Activated B cell treated with CpG ODN at 0.5 μM for 24 hours (primary cell): ENCODE measurements at regions of chr5 and their contacts with region 1.

Region 1: DNA sequence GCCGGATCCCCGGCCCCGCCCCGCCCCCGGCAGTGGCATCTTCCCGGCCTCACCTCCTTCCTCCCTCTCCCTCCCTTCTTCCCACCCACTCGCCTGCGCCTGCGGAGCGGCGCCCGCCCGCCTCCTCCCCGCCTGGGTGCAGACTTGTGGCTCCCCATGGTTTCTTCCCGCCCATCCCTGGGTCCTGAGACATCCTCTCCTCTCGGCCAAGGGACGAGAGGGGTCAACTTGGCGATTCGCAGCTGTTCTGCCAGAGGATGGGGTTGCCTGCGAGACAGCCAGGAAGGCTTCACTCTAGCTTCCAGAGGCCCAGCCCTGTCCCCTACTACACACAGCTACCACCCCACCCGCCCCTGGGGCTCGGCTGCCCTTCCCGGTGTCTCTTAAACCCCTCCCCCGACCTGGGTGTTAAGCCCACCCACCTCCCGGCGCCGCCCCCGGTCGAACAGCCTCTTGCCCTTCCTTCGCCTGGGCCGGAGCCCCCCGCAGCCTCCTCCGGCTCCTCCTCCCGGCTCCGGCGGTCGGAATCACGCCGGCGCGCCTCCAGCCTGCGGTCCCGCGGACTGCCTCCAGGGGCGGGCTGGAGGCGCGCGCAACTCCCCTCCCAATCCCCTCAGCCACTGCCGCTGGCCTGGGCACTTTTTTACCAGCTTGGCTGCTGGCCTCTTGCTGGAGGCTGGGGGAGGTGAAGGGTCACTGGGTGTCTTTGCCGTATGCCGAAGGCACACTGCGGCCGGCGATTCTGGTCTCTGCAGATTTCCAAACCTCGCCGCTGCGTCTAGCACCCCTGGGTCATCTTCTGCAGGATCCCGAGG is 1.9 kb downstream of the JADE2 start:
- DNase-seq: peak; percentile 73
- ATAC-seq: peak; percentile 49
- H3K4me3 Mint-ChIP-seq: peak overlapping the region; percentile 98
- H3K27ac Mint-ChIP-seq: peak overlapping the region; percentile 85
- H3K4me1 Mint-ChIP-seq: peaks cover 58% of the 10 kb centered on the region
- H3K27me3 Mint-ChIP-seq: no peaks in the 10 kb centered on the region
- CTCF ChIP-seq: no peak

Region 2: DNA sequence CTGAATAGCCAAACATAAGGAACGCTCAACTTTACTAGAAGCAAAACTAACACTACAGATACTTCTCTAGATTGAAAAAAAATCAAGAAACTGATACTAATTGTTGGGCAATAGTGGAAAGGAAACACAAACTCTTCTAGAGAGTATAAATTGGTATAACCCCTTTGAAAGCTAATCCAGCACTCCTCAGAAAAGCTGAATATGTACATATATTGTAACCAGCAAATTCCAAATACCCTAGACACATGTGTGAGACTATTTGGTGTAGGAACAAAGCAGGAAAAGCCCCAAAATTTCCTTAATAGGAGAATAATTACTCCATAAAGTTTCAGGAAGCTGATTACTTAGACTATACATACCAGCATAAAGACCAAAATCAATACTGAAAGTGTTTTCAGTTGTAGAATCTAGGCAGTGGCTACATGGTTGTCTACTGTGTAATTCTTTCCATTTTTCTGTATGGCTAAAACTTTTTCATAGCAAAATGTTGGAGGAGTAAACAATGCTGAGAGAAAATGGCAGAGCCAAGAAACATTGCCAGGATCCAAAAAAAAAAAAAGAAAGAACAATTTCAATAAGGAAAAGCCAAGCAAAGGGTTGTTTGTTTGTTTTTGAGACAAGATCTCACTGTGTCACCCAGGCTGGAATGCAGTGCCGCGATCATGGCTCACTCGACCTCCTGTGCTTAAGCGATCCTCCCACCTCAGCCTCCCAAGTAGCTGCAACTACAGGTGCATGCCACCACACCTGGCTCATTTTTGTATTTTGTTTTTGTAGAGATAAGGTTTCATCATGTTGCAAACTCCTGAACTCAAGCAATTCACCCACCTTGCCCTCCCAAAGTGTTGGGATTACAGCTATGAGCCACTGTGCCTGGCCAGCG is 365.6 kb before region 1 on chr5:
- CTCF ChIA-PET with region 1: no interaction called
- POLR2A ChIA-PET with region 1: no interaction called
- intact Hi-C with region 1: no loop called
- DNase-seq: no peak
- ATAC-seq: no peak
- H3K4me3 Mint-ChIP-seq: no peak overlapping the region
- H3K27ac Mint-ChIP-seq: no peak overlapping the region
- H3K4me1 Mint-ChIP-seq: no peaks in the 10 kb centered on the region
- H3K27me3 Mint-ChIP-seq: no peaks in the 10 kb centered on the region
- CTCF ChIP-seq: no peak

Region 3: DNA sequence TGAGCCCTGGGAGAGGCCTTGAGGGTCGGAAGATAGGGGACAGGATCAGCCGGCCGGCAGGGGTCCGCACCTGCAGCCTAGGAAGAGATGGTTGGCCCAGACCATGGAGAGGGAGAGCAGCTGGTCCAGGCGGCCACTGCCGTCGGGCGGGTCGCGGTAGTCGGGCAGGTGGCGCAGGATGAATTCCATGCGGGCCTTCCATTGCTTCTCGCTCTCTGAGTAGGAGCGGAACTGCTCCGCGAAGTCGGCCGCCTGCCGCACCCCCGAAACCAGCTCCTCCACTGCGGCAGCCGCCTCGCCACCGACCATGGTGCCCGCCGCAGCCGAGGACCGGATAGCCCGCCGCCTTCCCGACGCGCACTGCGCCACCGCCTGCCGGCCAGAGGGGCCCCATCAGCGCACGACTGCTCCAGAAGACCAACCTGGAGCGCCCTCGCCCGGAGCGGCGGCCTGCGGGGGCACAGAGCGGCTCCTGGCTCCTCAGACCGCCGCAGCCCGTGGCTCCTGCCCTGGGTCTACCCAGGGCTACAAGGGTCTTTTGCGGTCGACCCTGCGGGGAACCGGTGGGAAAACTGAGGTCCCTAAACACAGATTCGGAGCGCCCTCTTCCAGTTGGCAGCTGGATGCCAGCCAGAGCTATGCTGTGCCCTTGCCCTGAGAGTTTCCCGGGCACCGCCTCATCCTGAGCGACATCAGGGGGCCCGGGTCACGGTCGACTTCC is 115.6 kb before region 1 on chr5 and contains the start of gene CDKN2AIPNL:
- CTCF ChIA-PET with region 1: interaction called, 24 read pairs
- POLR2A ChIA-PET with region 1: interaction called, 81 read pairs
- intact Hi-C with region 1: loop called (anchors 1 kb)
- DNase-seq: peak; percentile 92
- ATAC-seq: peak; percentile 99
- H3K4me3 Mint-ChIP-seq: peak within 1 kb of the TSS; percentile 95
- H3K27ac Mint-ChIP-seq: peak within 1 kb of the TSS; percentile 85
- H3K4me1 Mint-ChIP-seq: peaks cover 31% of the 10 kb centered on the region
- H3K27me3 Mint-ChIP-seq: no peaks in the 10 kb centered on the region
- CTCF ChIP-seq: no peak
- total RNA-seq, gene CDKN2AIPNL: 21.6 and 22.4 TPM in 2 replicates

Region 4: GRCh38 chr5:134465816-134466240 is 61.5 kb before region 1 on chr5:
- CTCF ChIA-PET with region 1: no interaction called
- POLR2A ChIA-PET with region 1: interaction called, 34 read pairs
- intact Hi-C with region 1: loop called (anchors 2 kb)
- DNase-seq: peak; percentile 68
- ATAC-seq: peak; percentile 82
- H3K4me3 Mint-ChIP-seq: peak overlapping the region; percentile 79
- H3K27ac Mint-ChIP-seq: peak overlapping the region; percentile 66
- H3K4me1 Mint-ChIP-seq: peaks cover 43% of the 10 kb centered on the region
- H3K27me3 Mint-ChIP-seq: no peaks in the 10 kb centered on the region
- CTCF ChIP-seq: no peak

Region 5: GRCh38 chr5:134555890-134556311 is 28.5 kb after region 1 on chr5:
- CTCF ChIA-PET with region 1: interaction called, 41 read pairs
- POLR2A ChIA-PET with region 1: interaction called, 763 read pairs
- intact Hi-C with region 1: loop called (anchors 1 kb)
- DNase-seq: peak; percentile 75
- ATAC-seq: peak; percentile 73
- H3K4me3 Mint-ChIP-seq: peak overlapping the region; percentile 75
- H3K27ac Mint-ChIP-seq: peak overlapping the region; percentile 98
- H3K4me1 Mint-ChIP-seq: peaks cover 64% of the 10 kb centered on the region
- H3K27me3 Mint-ChIP-seq: no peaks in the 10 kb centered on the region
- CTCF ChIP-seq: no peak

Region 6: DNA sequence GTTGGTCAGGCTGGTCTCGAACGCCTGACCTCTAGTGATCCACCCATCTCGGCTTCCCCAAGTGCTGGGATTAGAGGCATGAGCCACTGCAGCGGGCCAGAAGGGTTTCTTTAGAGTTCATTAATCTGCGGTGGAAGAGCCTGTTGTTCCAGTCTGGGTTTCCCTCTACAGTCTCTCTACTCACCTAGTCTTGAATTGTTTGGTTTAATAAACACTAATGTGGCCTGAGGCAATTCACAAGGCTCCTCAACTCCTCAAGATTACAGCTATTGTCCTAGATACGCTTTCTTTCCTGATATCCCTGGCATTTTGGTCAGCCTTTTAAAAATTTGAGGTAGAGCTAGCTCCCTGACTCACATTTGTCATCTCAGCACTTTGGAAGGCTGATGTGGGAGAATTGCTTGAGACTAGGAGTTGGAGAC is 109.8 kb after region 1 on chr5:
- CTCF ChIA-PET with region 1: no interaction called
- POLR2A ChIA-PET with region 1: interaction called, 5 read pairs
- intact Hi-C with region 1: loop called (anchors 1 kb)
- DNase-seq: no peak
- ATAC-seq: no peak
- H3K4me3 Mint-ChIP-seq: no peak overlapping the region
- H3K27ac Mint-ChIP-seq: no peak overlapping the region
- H3K4me1 Mint-ChIP-seq: peaks cover 2% of the 10 kb centered on the region
- H3K27me3 Mint-ChIP-seq: no peaks in the 10 kb centered on the region
- CTCF ChIP-seq: no peak

Region 7: GRCh38 chr5:134904630-134905245 is 377.4 kb after region 1 on chr5 and contains the start of gene PCBD2:
- CTCF ChIA-PET with region 1: no interaction called
- POLR2A ChIA-PET with region 1: interaction called, 5 read pairs
- intact Hi-C with region 1: loop called (anchors 2 kb)
- DNase-seq: peak; percentile 92
- ATAC-seq: peak; percentile 80
- H3K4me3 Mint-ChIP-seq: peak within 1 kb of the TSS; percentile 91
- H3K27ac Mint-ChIP-seq: peak within 1 kb of the TSS; percentile 96
- H3K4me1 Mint-ChIP-seq: peaks cover 37% of the 10 kb centered on the region
- H3K27me3 Mint-ChIP-seq: no peaks in the 10 kb centered on the region
- CTCF ChIP-seq: no peak
- total RNA-seq, gene PCBD2: 8.4 and 11.5 TPM in 2 replicates